ENCODE measurements at regions of chr16 and their contacts with region 1.

Region 1: GRCh38 chr16:28950648-28951409 is at the start of gene NFATC2IP:
- DNase-seq: peak; percentile 99 to 100 (median 99)
- H3K4me3 ChIP-seq: peak within 1 kb of the TSS; percentile 74
- H3K4me3 Mint-ChIP-seq: peak within 1 kb of the TSS; percentile 88 to 98 (median 94)
- H3K27ac ChIP-seq: peak within 1 kb of the TSS; percentile 73
- H3K27ac Mint-ChIP-seq: peak within 1 kb of the TSS; percentile 68 to 97 (median 88)
- H3K4me1 ChIP-seq: peaks cover 18% of the 10 kb centered on the region
- H3K4me1 Mint-ChIP-seq: peaks cover 22 to 42% (median 22%) of the 10 kb centered on the region in 3 donors
- H3K27me3 ChIP-seq: no peaks in the 10 kb centered on the region
- H3K27me3 Mint-ChIP-seq: peaks cover 0 to 4% of the 10 kb centered on the region in 2 donors
- total RNA-seq, gene NFATC2IP: 75.1 to 77.0 TPM

Region 2: GRCh38 chr16:28873536-28874201 is 77.2 kb before region 1 on chr16:
- CTCF ChIA-PET with region 1: interaction called, 34 read pairs
- POLR2A ChIA-PET with region 1: no interaction called
- DNase-seq: peak; percentile 49 to 74 (median 53)
- H3K4me3 ChIP-seq: no peak overlapping the region
- H3K4me3 Mint-ChIP-seq: peak overlapping the region in 1 of 7 donors; percentile 34
- H3K27ac ChIP-seq: no peak overlapping the region
- H3K27ac Mint-ChIP-seq: peak overlapping the region in 3 of 8 donors; percentile 50 to 93 (median 66)
- H3K4me1 ChIP-seq: no peaks in the 10 kb centered on the region
- H3K4me1 Mint-ChIP-seq: peaks cover 0 to 2% (median 0%) of the 10 kb centered on the region in 3 donors
- H3K27me3 ChIP-seq: no peaks in the 10 kb centered on the region
- H3K27me3 Mint-ChIP-seq: no peaks in the 10 kb centered on the region

Region 3: DNA sequence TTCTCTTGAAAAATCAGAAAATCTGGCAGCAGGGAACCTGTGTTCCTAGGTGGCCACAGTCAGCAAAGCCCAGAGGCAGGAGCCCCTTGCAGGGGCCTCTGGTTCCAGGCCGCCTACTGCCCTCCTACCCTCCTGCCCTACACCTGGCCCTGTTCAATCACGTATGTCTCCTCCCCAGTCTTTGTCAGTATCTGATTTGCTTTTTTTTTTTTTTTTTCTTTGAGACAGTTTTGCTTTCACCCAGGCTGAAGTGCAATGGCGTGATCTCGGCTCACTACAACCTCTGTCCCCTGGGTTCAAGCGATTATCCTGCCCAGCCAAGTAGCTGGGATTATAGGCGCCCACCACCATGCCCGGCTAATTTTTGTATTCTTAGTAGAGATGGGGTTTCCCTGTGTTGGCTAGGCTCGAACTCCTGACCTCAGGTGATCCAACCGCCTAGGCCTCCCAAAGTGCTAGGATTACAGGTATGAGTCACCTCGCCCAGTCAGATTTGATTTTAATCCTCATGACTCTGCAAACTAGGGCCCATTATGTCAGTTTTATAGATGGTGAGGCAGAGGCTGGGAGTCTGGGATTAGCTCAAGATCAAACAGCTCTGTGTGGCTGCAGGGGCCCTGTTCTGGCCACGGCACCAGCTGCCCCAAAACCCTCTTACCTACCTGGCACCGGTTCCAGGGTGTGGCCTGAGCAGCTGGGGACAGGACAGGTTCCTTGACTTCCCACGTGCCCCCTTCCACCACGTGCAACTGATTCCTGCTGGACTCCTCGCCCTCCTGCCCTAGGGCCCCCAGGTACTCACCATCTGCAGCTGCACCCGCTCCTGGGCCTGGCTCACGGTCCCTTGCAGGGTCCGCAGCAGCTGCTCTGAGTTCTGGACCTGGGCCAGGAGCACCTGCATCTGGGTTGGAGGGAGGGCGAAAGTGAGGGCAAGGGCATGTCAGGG is 40.5 kb before region 1 on chr16:
- CTCF ChIA-PET with region 1: no interaction called
- POLR2A ChIA-PET with region 1: no interaction called
- DNase-seq: no peak
- H3K4me3 ChIP-seq: no peak overlapping the region
- H3K4me3 Mint-ChIP-seq: no peak overlapping the region
- H3K27ac ChIP-seq: no peak overlapping the region
- H3K27ac Mint-ChIP-seq: no peak overlapping the region
- H3K4me1 ChIP-seq: no peaks in the 10 kb centered on the region
- H3K4me1 Mint-ChIP-seq: peaks cover 0 to 3% (median 0%) of the 10 kb centered on the region in 3 donors
- H3K27me3 ChIP-seq: no peaks in the 10 kb centered on the region
- H3K27me3 Mint-ChIP-seq: no peaks in the 10 kb centered on the region

Region 4: GRCh38 chr16:28924732-28925385 is 26.0 kb before region 1 on chr16 and contains the start of gene RABEP2:
- CTCF ChIA-PET with region 1: interaction called, 55 read pairs
- POLR2A ChIA-PET with region 1: interaction called, 4 read pairs
- DNase-seq: peak; percentile 92 to 96 (median 95)
- H3K4me3 ChIP-seq: peak within 1 kb of the TSS; percentile 86
- H3K4me3 Mint-ChIP-seq: peak within 1 kb of the TSS; percentile 86 to 98 (median 94)
- H3K27ac ChIP-seq: peak within 1 kb of the TSS; percentile 96
- H3K27ac Mint-ChIP-seq: peak within 1 kb of the TSS; percentile 91 to 99 (median 99)
- H3K4me1 ChIP-seq: peaks cover 11% of the 10 kb centered on the region
- H3K4me1 Mint-ChIP-seq: peaks cover 13 to 24% (median 15%) of the 10 kb centered on the region in 3 donors
- H3K27me3 ChIP-seq: no peaks in the 10 kb centered on the region
- H3K27me3 Mint-ChIP-seq: peaks cover 0 to 2% of the 10 kb centered on the region in 2 donors
- total RNA-seq, gene RABEP2: 20.8 to 21.7 TPM

Region 5: GRCh38 chr16:28935924-28936783 is 14.7 kb before region 1 on chr16:
- CTCF ChIA-PET with region 1: interaction called, 11 read pairs
- POLR2A ChIA-PET with region 1: interaction called, 3 read pairs
- DNase-seq: peak; percentile 63 to 86 (median 78)
- H3K4me3 ChIP-seq: peak overlapping the region; percentile 23
- H3K4me3 Mint-ChIP-seq: peak overlapping the region in 6 of 7 donors; percentile 62 to 80 (median 72)
- H3K27ac ChIP-seq: peak overlapping the region; percentile 61
- H3K27ac Mint-ChIP-seq: peak overlapping the region; percentile 0 to 70 (median 27)
- H3K4me1 ChIP-seq: peaks cover 12% of the 10 kb centered on the region
- H3K4me1 Mint-ChIP-seq: peaks cover 10 to 14% (median 14%) of the 10 kb centered on the region in 3 donors
- H3K27me3 ChIP-seq: no peaks in the 10 kb centered on the region
- H3K27me3 Mint-ChIP-seq: no peaks in the 10 kb centered on the region

Region 6: GRCh38 chr16:29012913-29013553 is 62.2 kb after region 1 on chr16:
- CTCF ChIA-PET with region 1: no interaction called
- POLR2A ChIA-PET with region 1: interaction called, 11 read pairs
- DNase-seq: peak in 3 of 5 donors; percentile 53 to 80 (median 61)
- H3K4me3 ChIP-seq: peak overlapping the region; percentile 1
- H3K4me3 Mint-ChIP-seq: peak overlapping the region; percentile 14 to 68 (median 43)
- H3K27ac ChIP-seq: peak overlapping the region; percentile 2
- H3K27ac Mint-ChIP-seq: peak overlapping the region; percentile 78 to 97 (median 90)
- H3K4me1 ChIP-seq: peaks cover 54% of the 10 kb centered on the region
- H3K4me1 Mint-ChIP-seq: peaks cover 37 to 54% (median 52%) of the 10 kb centered on the region in 3 donors
- H3K27me3 ChIP-seq: no peaks in the 10 kb centered on the region
- H3K27me3 Mint-ChIP-seq: no peaks in the 10 kb centered on the region

Measured in CD8-positive, alpha-beta memory T cell (primary cell).